HEK293T (cell line): ENCODE measurements at regions of chr7 and their contacts with region 1.

Region 1: DNA sequence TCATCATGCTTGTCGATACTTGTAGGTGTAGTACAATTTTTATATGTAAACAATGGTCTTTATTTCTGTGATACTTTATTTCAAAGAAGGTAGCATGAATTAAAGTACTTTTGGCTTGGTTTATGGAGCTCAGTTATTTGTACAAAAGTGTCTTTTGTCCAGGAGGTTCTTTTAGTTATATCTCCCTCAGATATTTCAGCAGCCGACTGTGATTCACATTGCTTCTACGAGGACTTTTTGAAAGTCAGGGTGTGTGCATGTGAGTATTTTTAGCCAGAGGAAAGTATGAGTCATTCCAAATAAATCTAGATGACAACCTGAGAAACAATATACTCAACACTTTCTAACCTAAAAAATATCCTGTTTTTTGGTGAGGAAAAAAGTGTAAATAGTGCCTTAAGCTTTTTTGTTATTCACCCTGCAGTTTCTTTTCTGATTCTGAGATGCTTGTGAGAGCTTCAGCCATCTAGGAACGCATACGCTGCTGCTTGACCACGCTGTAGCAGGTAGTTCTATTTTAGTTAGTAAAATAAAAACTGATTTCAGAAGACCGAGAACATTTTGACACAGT is 595 bp upstream of the SUN1 start:
- DNase-seq: peak; percentile 40

Region 2: DNA sequence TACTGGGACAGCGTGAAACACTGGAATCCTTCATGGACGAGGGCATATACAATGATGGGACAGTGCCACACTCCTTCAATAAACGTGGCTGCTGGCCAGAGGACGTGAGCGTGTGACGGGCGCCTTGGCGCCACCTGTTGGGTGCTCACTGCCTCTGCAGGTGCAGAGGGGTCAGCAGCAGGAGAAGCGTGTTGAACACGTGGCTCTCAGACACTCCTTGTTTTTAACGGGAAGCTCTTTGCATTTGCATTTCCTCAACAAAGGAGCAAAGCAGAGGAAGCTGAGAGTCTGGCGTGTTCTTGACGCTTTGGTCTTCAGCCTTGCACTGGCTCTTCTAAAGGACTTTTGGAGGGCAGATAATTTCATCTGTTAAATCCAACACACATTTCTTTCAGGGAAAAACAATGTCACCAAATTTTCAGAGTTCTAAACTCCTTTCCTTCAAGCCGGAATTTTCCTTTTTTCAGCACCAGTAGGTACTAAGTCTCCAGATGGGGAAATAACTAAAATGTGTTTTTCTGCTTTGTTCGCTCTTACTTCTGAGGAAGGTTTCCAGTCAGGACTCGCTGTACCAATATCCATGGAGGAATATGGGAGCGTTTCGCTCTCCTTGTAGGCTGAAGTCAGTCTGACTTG is 41.8 kb after region 1 on chr7:
- CTCF ChIA-PET with region 1: interaction called, 11 read pairs
- POLR2A ChIA-PET with region 1: no interaction called
- DNase-seq: peak; percentile 87